Left colon (tissue), 2 donors: ENCODE measurements at regions of chr7 and their contacts with region 1.

Region 1: GRCh38 chr7:113421696-113422330 is 303.5 kb upstream of the SMIM30 start:
- DNase-seq: peak; percentile 61 to 88
- ATAC-seq: peak; percentile 92

Region 2: DNA sequence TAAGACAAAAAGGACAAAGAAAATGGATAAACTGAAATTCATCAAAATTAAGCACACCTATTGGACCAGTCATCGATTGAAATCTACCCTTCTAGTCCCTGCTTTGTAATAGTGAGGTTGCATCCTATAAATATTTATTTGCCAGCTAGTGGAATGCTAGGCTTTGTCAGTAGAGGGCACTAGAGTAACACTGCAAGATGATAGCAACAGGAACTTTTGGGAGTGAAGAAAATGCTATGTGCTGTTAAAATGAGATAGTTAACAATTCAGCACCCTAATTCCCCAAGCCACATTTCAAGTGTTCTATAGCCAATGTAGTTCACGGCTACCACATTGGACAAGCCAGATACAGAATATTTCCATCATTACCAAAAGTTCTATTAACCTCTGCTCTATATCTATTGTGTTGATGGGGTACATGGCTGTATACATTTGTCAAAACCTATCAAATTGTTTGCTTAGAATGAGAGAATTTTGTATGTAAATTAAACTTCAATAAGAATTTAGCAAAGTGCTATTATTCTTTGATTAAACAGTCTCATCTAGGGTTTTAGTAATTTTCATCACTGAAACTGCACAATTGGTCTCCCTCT is 871.2 kb before region 1 on chr7:
- intact Hi-C with region 1: loop called in 1 of 2 experiments (anchors 5 kb)
- DNase-seq: no peak
- ATAC-seq: peak; percentile 80

Region 3: GRCh38 chr7:113026941-113027340 is 394.9 kb before region 1 on chr7:
- intact Hi-C with region 1: loop called in 1 of 2 experiments (anchors 10 kb)
- DNase-seq: no peak
- ATAC-seq: no peak

Region 4: DNA sequence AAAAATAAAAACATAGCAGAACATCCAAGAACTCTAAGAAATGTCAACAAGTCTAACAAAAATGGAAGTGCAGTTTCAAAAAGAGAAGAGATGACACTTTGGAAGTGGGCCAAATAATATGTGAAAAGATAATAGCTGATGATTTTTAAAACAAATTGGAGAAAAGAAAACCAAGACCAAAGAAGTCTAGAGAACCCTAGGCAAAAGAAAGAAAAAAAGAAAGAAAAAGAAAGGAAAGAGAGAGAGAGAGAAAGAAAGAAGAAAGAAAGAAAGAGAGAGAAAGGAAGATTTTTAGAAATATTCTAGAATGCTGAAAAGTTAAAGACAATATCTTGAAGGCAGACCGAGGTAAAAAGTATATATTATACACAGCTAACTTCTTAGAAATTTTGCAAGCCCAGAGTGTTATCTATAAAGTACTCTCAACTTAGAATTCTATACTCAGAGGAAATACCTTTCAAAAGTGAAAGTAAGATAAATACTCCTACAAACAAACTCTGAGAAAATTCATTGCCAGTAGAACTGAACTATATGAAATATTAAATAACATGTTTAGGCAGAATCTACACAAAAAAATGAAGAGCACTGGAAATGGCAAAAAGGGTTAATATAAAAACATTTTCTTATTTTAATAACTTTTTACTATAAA is 164.8 kb before region 1 on chr7:
- intact Hi-C with region 1: no loop called
- DNase-seq: no peak
- ATAC-seq: no peak